ENCODE measurements at regions of chrX and their contacts with region 1.

Region 1: DNA sequence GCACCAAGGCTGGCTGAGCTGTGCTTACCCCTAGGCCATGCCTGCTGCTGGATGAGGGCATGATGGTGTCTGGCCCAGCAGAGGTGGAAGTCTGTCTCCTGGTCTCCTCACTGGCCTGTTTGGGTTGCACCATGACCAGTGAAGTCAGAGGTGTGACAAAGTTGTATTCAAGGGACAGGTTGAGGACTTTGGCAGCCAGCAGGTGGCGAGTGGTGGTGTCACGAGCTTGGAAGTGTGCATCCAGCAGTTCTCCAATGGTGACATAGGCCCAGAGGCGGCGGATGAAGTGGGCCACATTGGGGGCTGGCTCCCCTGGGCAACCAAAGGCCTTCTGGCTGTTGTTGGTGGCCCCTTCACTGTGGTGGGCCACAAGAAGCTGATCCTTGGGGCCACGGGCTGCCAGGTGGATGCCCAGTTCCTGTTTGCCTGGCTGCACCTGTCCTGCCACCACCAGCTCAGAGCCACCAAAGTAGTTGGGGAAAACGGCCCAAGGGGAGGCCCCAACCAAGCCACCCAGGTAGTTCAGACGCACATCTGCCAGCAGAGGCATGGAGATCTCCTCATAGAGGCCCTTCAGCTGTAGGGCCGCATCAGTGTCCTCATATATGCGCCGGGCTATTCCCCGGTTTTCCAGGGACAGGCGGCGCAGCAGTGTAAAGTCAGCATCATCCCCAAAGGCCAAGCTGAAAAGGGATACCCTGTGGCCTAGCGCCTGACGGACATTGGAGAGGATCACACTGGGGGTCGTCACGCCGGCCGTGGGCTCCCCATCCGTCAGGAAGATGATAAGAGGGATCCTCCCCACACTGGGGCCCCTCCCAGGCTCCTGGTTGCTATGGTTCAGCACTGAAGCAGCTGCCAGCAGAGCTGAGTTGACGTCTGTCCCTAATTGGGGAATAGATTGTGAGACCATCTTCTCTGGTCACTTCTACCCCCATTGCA is 39.7 kb downstream of the ITIH6 start:
- DNase-seq: no peak
- ATAC-seq: no peak
- H3K4me3 ChIP-seq: no peak overlapping the region
- H3K4me3 Mint-ChIP-seq: no peak overlapping the region
- H3K27ac ChIP-seq: no peak overlapping the region
- H3K27ac Mint-ChIP-seq: no peak overlapping the region
- H3K4me1 ChIP-seq: no peaks in the 10 kb centered on the region
- H3K4me1 Mint-ChIP-seq: no peaks in the 10 kb centered on the region
- H3K27me3 ChIP-seq: no peaks in the 10 kb centered on the region
- H3K27me3 Mint-ChIP-seq: no peaks in the 10 kb centered on the region
- CTCF ChIP-seq: no peak

Region 2: GRCh38 chrX:54776987-54777672 is 18.7 kb after region 1 on chrX:
- CTCF ChIA-PET with region 1: no interaction called
- POLR2A ChIA-PET with region 1: no interaction called
- intact Hi-C with region 1: loop called in 1 of 2 experiments (anchors 2 kb)
- DNase-seq: peak in 2 of 14 experiments; percentile 7 to 25
- ATAC-seq: no peak
- H3K4me3 ChIP-seq: no peak overlapping the region
- H3K4me3 Mint-ChIP-seq: no peak overlapping the region
- H3K27ac ChIP-seq: no peak overlapping the region
- H3K27ac Mint-ChIP-seq: no peak overlapping the region
- H3K4me1 ChIP-seq: peaks cover 13% of the 10 kb centered on the region
- H3K4me1 Mint-ChIP-seq: peaks cover 13% of the 10 kb centered on the region
- H3K27me3 ChIP-seq: no peaks in the 10 kb centered on the region
- H3K27me3 Mint-ChIP-seq: no peaks in the 10 kb centered on the region
- CTCF ChIP-seq: no peak

Region 3: DNA sequence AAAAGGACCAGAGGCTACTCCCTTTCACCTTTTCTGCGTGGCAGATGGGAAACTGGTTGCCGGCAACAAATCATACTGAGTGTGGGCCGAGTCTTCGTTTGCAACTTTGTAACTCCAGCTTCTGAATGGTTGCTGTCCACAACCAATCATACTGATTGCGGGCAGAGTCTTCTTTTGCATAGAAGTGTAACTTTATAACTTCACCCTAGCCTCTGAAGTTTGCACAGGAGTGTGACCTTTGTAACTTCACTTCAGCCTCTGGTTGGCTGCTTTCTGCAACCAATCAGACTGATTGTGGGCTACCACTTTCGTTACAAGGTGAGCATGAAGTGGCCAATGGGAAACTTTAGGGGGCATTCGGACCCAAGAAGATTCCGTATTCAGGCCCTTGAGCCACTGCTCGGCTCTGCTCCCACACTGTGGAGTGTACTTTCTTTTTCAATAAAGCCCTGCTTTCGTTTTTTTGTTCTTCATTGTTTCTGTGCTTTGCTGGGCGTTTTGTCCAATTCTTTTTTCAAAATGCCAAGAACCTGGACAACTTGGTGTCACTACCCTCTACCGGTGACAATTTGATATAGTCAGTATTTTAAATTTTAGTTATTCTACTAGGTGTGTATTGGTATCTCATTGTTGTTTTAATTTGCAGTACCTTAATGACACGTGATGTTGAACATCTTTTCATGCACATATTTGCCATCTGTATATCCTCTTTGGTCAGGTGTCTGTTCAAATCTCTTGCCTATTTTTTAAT is 452.7 kb after region 1 on chrX:
- CTCF ChIA-PET with region 1: no interaction called
- POLR2A ChIA-PET with region 1: no interaction called
- intact Hi-C with region 1: no loop called
- DNase-seq: no peak
- ATAC-seq: no peak
- H3K4me3 ChIP-seq: no peak overlapping the region
- H3K4me3 Mint-ChIP-seq: no peak overlapping the region
- H3K27ac ChIP-seq: no peak overlapping the region
- H3K27ac Mint-ChIP-seq: no peak overlapping the region
- H3K4me1 ChIP-seq: no peaks in the 10 kb centered on the region
- H3K4me1 Mint-ChIP-seq: no peaks in the 10 kb centered on the region
- H3K27me3 ChIP-seq: peaks cover 0 to 2% of the 10 kb centered on the region in 2 experiments
- H3K27me3 Mint-ChIP-seq: no peaks in the 10 kb centered on the region
- CTCF ChIP-seq: no peak

Measured in CD4-positive, alpha-beta T cell (primary cell).